ENCODE measurements at regions of chr6 and their contacts with region 1.

Region 1: DNA sequence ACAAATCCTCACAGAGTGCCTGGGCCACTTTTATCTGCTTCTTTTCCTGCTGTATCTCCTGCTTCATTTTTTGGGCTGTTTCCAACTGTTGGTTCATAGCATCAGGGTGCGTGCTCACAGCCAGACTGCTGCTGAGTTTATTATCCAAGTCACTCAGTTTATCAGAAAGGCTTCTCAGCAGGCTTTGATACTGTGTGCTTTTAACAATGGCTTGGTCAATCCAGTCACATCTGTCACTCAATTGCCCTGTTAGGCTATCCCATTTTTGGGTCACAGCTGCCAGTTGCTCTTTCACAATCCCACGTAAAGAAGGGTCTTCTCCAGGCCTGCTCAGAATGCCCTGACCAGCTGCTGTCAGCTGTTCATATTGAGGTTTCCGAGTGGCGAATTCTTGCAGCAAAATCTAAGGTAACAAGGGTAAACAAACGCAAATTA is 87.2 kb downstream of the DST start:
- DNase-seq: no peak
- H3K4me3 ChIP-seq: no peak overlapping the region
- H3K27ac ChIP-seq: no peak overlapping the region
- H3K4me1 ChIP-seq: no peaks in the 10 kb centered on the region
- H3K27me3 ChIP-seq: no peaks in the 10 kb centered on the region

Region 2: GRCh38 chr6:56528412-56528841 is 27.0 kb before region 1 on chr6:
- CTCF ChIA-PET with region 1: no interaction called
- POLR2A ChIA-PET with region 1: no interaction called
- DNase-seq: no peak
- H3K4me3 ChIP-seq: no peak overlapping the region
- H3K27ac ChIP-seq: no peak overlapping the region
- H3K4me1 ChIP-seq: no peaks in the 10 kb centered on the region
- H3K27me3 ChIP-seq: no peaks in the 10 kb centered on the region

Region 3: DNA sequence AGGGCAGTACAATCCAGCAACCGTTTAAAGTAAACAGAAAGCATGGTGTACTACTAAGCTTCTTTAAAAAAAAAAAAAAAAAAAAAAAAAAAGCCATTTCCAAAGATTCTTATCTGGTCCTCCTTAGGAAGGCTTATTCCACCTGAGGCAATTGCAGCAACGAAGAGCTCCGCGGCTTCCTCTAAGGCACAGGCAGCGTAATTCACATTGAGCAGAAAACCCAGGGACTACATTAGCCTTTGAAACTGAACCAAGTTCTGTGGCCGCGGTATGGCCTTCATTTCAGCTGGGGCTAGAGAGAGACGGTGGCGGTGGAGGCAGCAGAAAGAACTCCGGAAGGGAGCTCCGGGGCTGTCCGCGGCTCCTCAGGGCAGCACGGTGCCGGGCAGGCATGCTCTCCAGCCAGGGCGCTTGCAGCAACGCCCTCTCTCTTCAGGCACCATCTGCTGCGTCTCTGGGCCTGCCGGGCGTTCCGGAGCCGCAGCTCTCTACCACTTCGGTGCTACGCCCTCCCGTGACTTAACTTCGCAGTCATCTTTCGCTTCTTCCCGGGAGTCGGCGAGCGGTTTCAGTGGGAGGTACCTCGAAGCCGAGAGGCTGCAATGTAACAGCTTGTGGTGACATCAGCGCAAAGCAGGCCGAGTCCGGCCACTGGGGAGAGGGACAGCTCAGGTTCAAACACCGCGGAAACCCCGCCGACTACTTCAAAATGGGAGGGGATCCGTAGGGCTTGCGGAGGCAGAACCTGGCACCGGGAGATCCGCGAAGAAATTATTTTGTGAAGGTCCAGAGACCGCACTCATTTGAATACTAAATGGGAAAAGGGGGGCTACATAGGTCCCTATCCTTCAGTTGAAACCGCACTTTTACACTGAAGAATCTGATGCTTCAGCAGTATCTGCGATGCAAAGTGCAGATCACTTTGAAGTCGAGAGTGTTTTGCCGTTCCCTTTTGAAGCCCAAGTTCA is 12.8 kb before region 1 on chr6:
- CTCF ChIA-PET with region 1: interaction called, 10 read pairs
- POLR2A ChIA-PET with region 1: no interaction called
- DNase-seq: peak; percentile 92 to 95 (median 93)
- H3K4me3 ChIP-seq: peak overlapping the region; percentile 66 to 93 (median 77)
- H3K27ac ChIP-seq: peak overlapping the region; percentile 64 to 85
- H3K4me1 ChIP-seq: peaks cover 17 to 40% (median 28%) of the 10 kb centered on the region in 4 experiments
- H3K27me3 ChIP-seq: no peaks in the 10 kb centered on the region